T-cell (primary cell): ENCODE measurements at regions of chr7 and their contacts with region 1.

Region 1: DNA sequence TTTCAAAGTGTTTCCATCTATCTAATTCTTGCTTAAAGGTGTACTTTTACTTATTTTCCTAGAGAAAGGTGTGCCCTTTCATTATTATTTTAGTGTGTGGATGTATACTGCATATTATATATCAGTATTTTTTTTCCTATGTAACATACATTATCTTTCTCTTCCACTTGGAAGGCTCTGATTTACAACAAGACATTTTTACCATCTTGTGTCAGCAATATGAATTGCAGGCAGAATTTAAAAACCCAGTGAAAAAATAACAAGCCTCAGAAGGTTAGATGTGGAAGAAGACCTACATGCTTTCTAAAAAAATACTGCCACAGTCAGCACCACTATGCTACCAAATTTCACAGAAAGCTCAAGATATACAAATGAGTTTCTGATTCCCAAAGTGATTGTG is 327.7 kb upstream of the STEAP1 start:
- DNase-seq: no peak
- ATAC-seq: no peak
- H3K4me3 ChIP-seq: no peak overlapping the region
- H3K4me3 Mint-ChIP-seq: no peak overlapping the region
- H3K27ac ChIP-seq: no peak overlapping the region
- H3K27ac Mint-ChIP-seq: no peak overlapping the region
- H3K4me1 ChIP-seq: no peaks in the 10 kb centered on the region
- H3K4me1 Mint-ChIP-seq: no peaks in the 10 kb centered on the region
- H3K27me3 ChIP-seq: no peaks in the 10 kb centered on the region
- H3K27me3 Mint-ChIP-seq: no peaks in the 10 kb centered on the region

Region 2: DNA sequence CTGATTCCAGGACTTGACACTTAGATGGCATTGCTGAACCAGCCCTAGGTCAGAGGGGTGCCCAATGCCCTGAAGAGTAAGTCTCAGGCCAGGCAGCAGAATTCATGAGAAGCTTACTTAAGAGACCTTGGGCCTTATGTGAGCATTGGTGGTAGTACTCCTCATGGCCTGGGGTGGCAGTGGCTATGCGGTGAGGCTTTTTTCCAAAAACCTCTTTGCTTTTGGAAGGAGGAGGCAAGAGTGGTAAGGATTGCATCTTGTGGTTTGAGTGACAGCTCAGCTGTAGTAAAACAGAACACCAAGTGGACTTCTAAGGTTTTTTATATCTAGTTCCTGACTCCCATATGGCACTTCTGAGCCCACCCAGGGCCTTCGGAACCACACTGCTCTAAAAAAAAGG is 131.3 kb before region 1 on chr7:
- CTCF ChIA-PET with region 1: no interaction called
- POLR2A ChIA-PET with region 1: no interaction called
- DNase-seq: no peak
- ATAC-seq: no peak
- H3K4me3 ChIP-seq: no peak overlapping the region
- H3K4me3 Mint-ChIP-seq: no peak overlapping the region
- H3K27ac ChIP-seq: no peak overlapping the region
- H3K27ac Mint-ChIP-seq: no peak overlapping the region
- H3K4me1 ChIP-seq: no peaks in the 10 kb centered on the region
- H3K4me1 Mint-ChIP-seq: no peaks in the 10 kb centered on the region
- H3K27me3 ChIP-seq: no peaks in the 10 kb centered on the region
- H3K27me3 Mint-ChIP-seq: no peaks in the 10 kb centered on the region

Region 3: GRCh38 chr7:89798599-89798996 is 28.0 kb before region 1 on chr7:
- CTCF ChIA-PET with region 1: no interaction called
- POLR2A ChIA-PET with region 1: no interaction called
- DNase-seq: no peak
- ATAC-seq: no peak
- H3K4me3 ChIP-seq: no peak overlapping the region
- H3K4me3 Mint-ChIP-seq: no peak overlapping the region
- H3K27ac ChIP-seq: no peak overlapping the region
- H3K27ac Mint-ChIP-seq: no peak overlapping the region
- H3K4me1 ChIP-seq: no peaks in the 10 kb centered on the region
- H3K4me1 Mint-ChIP-seq: no peaks in the 10 kb centered on the region
- H3K27me3 ChIP-seq: peaks cover 0 to 3% of the 10 kb centered on the region in 2 experiments
- H3K27me3 Mint-ChIP-seq: no peaks in the 10 kb centered on the region

Region 4: DNA sequence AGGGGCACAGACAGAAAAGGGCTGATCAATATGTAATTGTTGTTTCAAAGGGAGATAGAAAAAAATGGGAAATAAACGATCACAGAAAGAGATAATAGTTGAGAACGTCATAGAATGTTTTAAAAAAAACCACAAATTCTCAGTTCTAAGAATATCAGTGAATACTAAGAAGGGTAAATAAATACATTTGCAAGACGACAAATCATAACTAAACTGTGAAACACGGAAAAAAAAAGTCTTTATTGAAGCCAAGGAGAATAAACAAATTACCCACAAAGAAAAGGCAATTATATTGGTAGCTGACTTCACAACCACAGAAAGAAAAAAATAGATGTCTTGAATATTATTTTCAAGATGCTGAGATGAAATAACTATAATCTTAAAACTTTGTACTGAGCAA is 22.5 kb after region 1 on chr7:
- CTCF ChIA-PET with region 1: no interaction called
- POLR2A ChIA-PET with region 1: no interaction called
- DNase-seq: no peak
- ATAC-seq: no peak
- H3K4me3 ChIP-seq: no peak overlapping the region
- H3K4me3 Mint-ChIP-seq: no peak overlapping the region
- H3K27ac ChIP-seq: no peak overlapping the region
- H3K27ac Mint-ChIP-seq: no peak overlapping the region
- H3K4me1 ChIP-seq: no peaks in the 10 kb centered on the region
- H3K4me1 Mint-ChIP-seq: no peaks in the 10 kb centered on the region
- H3K27me3 ChIP-seq: no peaks in the 10 kb centered on the region
- H3K27me3 Mint-ChIP-seq: no peaks in the 10 kb centered on the region

Region 5: DNA sequence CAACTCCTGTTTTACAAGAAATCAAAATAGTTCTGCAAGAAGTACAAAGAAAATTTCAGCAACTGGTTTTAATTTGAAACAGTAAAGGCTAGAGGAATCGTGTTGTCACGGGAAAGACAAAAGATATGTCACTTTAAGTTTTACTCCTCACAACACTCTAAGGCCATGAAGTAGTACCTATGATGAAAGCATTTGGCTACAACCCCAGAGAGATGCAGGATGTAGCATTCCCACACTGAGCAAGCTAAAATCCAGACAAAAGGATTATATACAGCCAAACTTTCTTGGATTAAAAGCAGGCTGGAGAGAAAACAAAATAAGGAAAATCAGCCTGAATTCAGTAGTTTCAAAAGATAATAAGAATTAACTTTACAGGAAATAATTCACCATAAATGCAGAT is 82.2 kb after region 1 on chr7:
- CTCF ChIA-PET with region 1: interaction called in 1 of 2 experiments, 11 read pairs
- POLR2A ChIA-PET with region 1: no interaction called
- DNase-seq: no peak
- ATAC-seq: no peak
- H3K4me3 ChIP-seq: no peak overlapping the region
- H3K4me3 Mint-ChIP-seq: no peak overlapping the region
- H3K27ac ChIP-seq: no peak overlapping the region
- H3K27ac Mint-ChIP-seq: no peak overlapping the region
- H3K4me1 ChIP-seq: no peaks in the 10 kb centered on the region
- H3K4me1 Mint-ChIP-seq: no peaks in the 10 kb centered on the region
- H3K27me3 ChIP-seq: no peaks in the 10 kb centered on the region
- H3K27me3 Mint-ChIP-seq: no peaks in the 10 kb centered on the region

Region 6: GRCh38 chr7:90119178-90119971 is 292.8 kb after region 1 on chr7:
- CTCF ChIA-PET with region 1: no interaction called
- POLR2A ChIA-PET with region 1: no interaction called
- DNase-seq: peak in 22 of 35 experiments; percentile 0 to 47 (median 16)
- ATAC-seq: peak; percentile 58 to 75 (median 67)
- H3K4me3 ChIP-seq: peak overlapping the region in 1 of 2 donors; percentile 7
- H3K4me3 Mint-ChIP-seq: peak overlapping the region; percentile 69 to 82 (median 76)
- H3K27ac ChIP-seq: no peak overlapping the region
- H3K27ac Mint-ChIP-seq: no peak overlapping the region
- H3K4me1 ChIP-seq: peaks cover 0 to 8% of the 10 kb centered on the region in 2 experiments
- H3K4me1 Mint-ChIP-seq: peaks cover 14 to 21% (median 19%) of the 10 kb centered on the region in 3 donors
- H3K27me3 ChIP-seq: peaks cover 0 to 16% of the 10 kb centered on the region in 2 experiments
- H3K27me3 Mint-ChIP-seq: peaks cover 25 to 27% of the 10 kb centered on the region in 2 donors